ENCODE measurements at regions of chr5 and their contacts with region 1.

Region 1: DNA sequence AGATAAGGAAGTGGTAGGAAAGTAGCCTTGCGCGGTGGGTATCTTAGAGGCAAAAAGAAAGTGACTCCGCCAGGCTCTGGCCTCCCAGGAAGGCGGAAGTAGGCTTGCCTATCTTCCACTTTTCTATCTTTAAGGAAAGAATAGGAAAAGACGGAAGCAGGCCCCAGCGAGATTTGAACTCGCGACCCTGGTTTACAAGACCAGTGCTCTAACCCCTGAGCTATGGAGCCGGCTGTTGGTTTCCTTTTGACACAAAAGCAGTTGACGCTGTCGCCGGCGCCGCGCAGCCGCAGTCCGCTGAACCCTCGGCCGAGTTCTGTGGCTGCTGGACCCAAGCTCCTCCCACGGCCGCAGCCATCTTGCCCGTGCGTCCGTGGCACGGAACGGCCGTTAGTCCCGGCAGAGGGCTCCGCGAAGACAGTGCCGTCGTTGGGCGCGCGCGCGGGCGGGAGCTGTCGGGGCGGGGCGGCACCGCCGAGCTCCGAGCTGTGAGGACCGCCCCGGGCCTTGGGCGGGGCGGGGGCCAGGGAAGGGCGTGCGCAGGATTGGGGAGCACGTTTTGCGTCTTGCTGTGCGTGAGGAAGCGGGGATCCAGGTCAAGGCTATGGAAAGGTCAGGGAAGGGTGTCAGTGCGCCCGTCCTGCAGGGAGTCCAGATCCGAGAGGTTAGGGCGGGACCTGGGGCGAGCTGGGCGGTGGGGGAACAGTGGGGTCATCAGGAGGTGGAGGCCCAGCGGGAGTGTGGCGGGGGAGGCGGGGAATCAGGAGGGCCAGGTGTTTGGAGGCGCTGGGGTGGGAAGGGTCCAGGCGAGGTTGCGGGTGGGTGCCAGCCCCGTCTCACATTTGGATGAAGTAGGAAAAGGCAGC is 13.2 kb downstream of the TRIM7 start:
- DNase-seq: peak; percentile 94 to 96
- H3K4me3 ChIP-seq: peak overlapping the region; percentile 94
- H3K4me3 Mint-ChIP-seq: peak overlapping the region; percentile 91
- H3K27ac Mint-ChIP-seq: peak overlapping the region; percentile 97
- H3K4me1 ChIP-seq: peaks cover 8% of the 10 kb centered on the region
- H3K4me1 Mint-ChIP-seq: peaks cover 26% of the 10 kb centered on the region
- H3K27me3 ChIP-seq: no peaks in the 10 kb centered on the region
- H3K27me3 Mint-ChIP-seq: peaks cover 10% of the 10 kb centered on the region
- CTCF ChIP-seq: no peak

Region 2: GRCh38 chr5:180975338-180975737 is 216.4 kb before region 1 on chr5:
- CTCF ChIA-PET with region 1: no interaction called
- POLR2A ChIA-PET with region 1: no interaction called
- intact Hi-C with region 1: no loop called
- DNase-seq: no peak
- H3K4me3 ChIP-seq: no peak overlapping the region
- H3K4me3 Mint-ChIP-seq: no peak overlapping the region
- H3K27ac Mint-ChIP-seq: peak overlapping the region; percentile 77
- H3K4me1 ChIP-seq: peaks cover 39% of the 10 kb centered on the region
- H3K4me1 Mint-ChIP-seq: peaks cover 38% of the 10 kb centered on the region
- H3K27me3 ChIP-seq: no peaks in the 10 kb centered on the region
- H3K27me3 Mint-ChIP-seq: no peaks in the 10 kb centered on the region
- CTCF ChIP-seq: no peak

Region 3: DNA sequence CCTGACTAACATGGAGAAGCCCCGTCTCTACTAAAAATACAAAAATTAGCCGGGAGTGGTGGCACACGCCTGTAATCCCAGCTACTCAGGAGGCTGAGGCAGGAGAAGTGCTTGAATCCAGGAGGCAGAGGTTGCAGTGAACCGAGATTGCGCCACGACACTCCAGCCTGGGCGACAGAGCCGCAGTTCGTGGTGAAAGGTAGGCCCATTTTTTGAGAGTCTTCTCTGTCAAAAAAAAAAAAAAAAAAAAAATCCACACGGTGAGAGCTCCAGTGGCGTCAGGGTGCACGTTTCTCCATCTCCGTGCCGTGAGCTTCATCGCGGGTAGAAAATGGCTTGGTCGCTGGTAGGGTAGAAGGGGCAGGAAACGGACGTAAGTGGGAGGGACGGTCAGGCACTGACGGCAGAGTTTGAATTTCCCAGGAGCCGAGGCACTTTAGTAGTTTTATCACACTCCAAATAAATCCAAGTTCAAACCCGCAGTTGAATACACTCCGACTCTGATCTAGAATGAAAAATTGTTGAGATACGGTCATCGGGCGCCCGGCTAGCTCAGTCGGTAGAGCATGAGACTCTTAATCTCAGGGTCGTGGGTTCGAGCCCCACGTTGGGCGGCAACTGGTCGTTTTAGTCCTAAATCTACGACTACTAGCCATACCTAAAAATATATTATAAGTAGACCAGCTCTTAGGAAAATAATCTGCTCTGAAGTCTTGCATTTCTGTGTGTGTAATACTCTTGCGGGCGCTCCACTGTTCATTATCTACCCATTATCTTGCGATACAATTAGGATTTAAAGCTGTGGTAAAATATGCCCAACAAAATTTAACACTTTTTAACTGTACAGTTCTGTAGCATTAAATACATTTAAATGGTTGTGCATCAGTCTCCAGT is 15.7 kb after region 1 on chr5:
- CTCF ChIA-PET with region 1: interaction called, 12 read pairs
- POLR2A ChIA-PET with region 1: interaction called, 9 read pairs
- intact Hi-C with region 1: loop called (anchors 1 kb)
- DNase-seq: peak; percentile 87 to 88
- H3K4me3 ChIP-seq: peak overlapping the region; percentile 50
- H3K4me3 Mint-ChIP-seq: peak overlapping the region; percentile 82
- H3K27ac Mint-ChIP-seq: peak overlapping the region; percentile 91
- H3K4me1 ChIP-seq: no peaks in the 10 kb centered on the region
- H3K4me1 Mint-ChIP-seq: peaks cover 28% of the 10 kb centered on the region
- H3K27me3 ChIP-seq: no peaks in the 10 kb centered on the region
- H3K27me3 Mint-ChIP-seq: peaks cover 15% of the 10 kb centered on the region
- CTCF ChIP-seq: no peak

Region 4: DNA sequence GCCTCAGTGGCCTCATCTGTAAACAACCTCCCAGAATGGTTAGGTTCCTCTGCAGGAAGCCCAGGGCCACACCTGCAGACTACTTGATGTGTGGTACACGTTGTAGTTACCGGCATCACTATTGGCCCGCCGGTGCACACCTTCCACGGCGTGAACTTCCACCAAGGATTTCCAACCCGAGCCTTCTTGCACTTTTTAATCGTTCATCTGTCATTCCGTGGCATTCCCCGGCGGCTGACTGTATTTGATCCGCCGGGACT is 26.0 kb after region 1 on chr5:
- CTCF ChIA-PET with region 1: interaction called, 8 read pairs
- POLR2A ChIA-PET with region 1: interaction called, 4 read pairs
- intact Hi-C with region 1: loop called (anchors 1 kb)
- DNase-seq: peak; percentile 58 to 69
- H3K4me3 ChIP-seq: peak overlapping the region; percentile 61
- H3K4me3 Mint-ChIP-seq: peak overlapping the region; percentile 85
- H3K27ac Mint-ChIP-seq: peak overlapping the region; percentile 59
- H3K4me1 ChIP-seq: 0 out of 2 replicates have a peak, but pooled peaks cover 4% of the 10 kb centered on the region
- H3K4me1 Mint-ChIP-seq: peaks cover 33% of the 10 kb centered on the region
- H3K27me3 ChIP-seq: no peaks in the 10 kb centered on the region
- H3K27me3 Mint-ChIP-seq: peaks cover 13% of the 10 kb centered on the region
- CTCF ChIP-seq: no peak

Region 5: DNA sequence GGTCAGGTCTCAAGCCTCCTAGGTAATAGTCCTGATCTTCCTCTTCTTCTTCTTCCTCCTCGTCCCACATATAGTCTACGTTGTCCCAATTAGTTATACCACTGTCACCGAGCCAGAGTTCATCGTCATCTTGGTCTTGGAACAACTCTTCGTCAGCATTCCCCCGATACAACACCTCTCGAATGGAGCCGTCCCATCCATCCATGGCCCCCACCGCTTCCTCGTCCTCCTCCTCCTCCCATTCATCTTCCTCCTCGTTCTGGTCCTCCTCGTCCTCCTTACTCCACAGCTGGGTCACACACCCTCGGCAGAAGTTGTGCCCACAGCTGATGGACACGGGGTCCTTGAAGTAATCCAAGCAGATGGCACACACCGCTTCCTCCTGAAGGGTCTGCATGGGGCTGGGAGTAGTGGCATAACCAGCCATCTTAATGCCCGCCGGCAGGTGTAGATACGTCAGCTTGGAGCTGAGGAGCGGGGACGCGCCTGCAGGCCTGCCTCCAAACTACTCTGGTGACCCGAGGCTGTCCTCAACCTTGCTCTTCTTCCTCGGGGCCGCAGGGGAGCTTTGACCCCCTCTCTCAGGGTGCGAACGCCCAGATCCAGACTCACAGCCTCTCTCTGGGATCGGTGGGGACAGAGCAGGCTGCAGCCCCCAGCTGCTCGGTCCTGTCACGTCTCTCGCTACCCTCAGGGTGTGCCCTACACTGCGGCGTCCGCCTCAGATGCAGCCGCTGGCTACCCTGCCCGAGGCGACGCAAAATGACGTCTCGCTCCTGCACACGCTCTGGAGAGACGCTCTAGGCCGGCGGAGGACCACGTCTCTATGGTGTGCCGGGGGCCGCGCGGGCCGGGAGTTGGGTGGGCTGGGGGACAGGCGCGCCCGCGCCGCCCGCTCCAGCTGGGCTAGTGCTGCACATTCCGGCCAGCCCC is 68.9 kb after region 1 on chr5 and contains the start of gene TRIM52:
- CTCF ChIA-PET with region 1: no interaction called
- POLR2A ChIA-PET with region 1: interaction called, 3 read pairs
- intact Hi-C with region 1: loop called (anchors 5 kb)
- DNase-seq: peak; percentile 91 to 95
- H3K4me3 ChIP-seq: peak within 1 kb of the TSS; percentile 60
- H3K4me3 Mint-ChIP-seq: peak within 1 kb of the TSS; percentile 80
- H3K27ac Mint-ChIP-seq: peak within 1 kb of the TSS; percentile 69
- H3K4me1 ChIP-seq: peaks cover 11% of the 10 kb centered on the region; the same call in 1 of the 2 replicates
- H3K4me1 Mint-ChIP-seq: peaks cover 15% of the 10 kb centered on the region
- H3K27me3 ChIP-seq: no peaks in the 10 kb centered on the region
- H3K27me3 Mint-ChIP-seq: no peaks in the 10 kb centered on the region
- CTCF ChIP-seq: no peak
- total RNA-seq, gene TRIM52: 11.9 and 13.6 TPM in 2 replicates